Right ventricle myocardium superior (tissue), 1 donor: ENCODE measurements at regions of chr3 and their contacts with region 1.

Region 1: DNA sequence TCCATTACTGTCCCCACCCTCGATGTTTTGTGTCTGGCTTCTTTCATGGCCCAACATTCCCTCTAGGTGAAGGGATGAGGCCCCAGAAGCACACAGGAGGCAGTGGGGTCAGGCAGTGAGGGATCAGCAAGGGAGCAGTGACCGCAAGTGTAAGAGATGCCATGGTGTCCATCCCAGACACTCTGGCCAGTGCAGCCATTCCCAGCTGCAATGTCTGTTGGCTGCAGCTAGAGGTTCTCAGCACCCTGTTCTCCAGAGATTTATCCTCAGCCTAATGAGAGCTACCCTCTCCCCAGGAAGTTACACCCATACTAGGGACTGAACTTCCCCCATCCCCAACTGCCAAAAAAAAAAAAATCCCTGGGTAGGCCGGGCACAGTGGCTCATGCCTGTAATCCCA is 40.2 kb downstream of the TRANK1 start:
- DNase-seq: no peak
- ATAC-seq: peak; percentile 75

Region 2: GRCh38 chr3:36957862-36958686 is 53.4 kb after region 1 on chr3:
- intact Hi-C with region 1: loop called (anchors 5 kb)
- DNase-seq: no peak
- ATAC-seq: no peak